Endothelial cell of umbilical vein (primary cell): ENCODE measurements at regions of chr11 and their contacts with region 1.

Region 1: GRCh38 chr11:108121274-108122155 is at the start of gene ACAT1:
- DNase-seq: peak; percentile 92
- H3K4me3 ChIP-seq: peak within 1 kb of the TSS; percentile 58 to 85 (median 60)
- H3K27ac ChIP-seq: peak within 1 kb of the TSS; percentile 19
- H3K4me1 ChIP-seq: peaks cover 16% of the 10 kb centered on the region
- H3K27me3 ChIP-seq: no peaks in the 10 kb centered on the region
- CTCF ChIP-seq: peak in 1 of 2 donors; percentile 38
- POLR2A ChIP-seq: peak; percentile 87
- total RNA-seq, gene ACAT1: 51.7 and 59.9 TPM in 2 replicates

Region 2: GRCh38 chr11:108008656-108009496 is 112.6 kb before region 1 on chr11 and contains the start of gene CUL5:
- CTCF ChIA-PET with region 1: interaction called, 6 read pairs
- POLR2A ChIA-PET with region 1: no interaction called
- dilution Hi-C with region 1: no loop called
- intact Hi-C with region 1: loop called (anchors 1 kb)
- DNase-seq: peak; percentile 90
- H3K4me3 ChIP-seq: peak within 1 kb of the TSS; percentile 44 to 88 (median 60)
- H3K27ac ChIP-seq: peak within 1 kb of the TSS; percentile 75
- H3K4me1 ChIP-seq: peaks cover 12% of the 10 kb centered on the region
- H3K27me3 ChIP-seq: no peaks in the 10 kb centered on the region
- CTCF ChIP-seq: peak; percentile 91 to 96
- POLR2A ChIP-seq: peak; percentile 91
- total RNA-seq, gene CUL5: 36.6 and 37.6 TPM in 2 replicates

Region 3: GRCh38 chr11:108147150-108147549 is 25.6 kb after region 1 on chr11:
- CTCF ChIA-PET with region 1: interaction called, 12 read pairs
- POLR2A ChIA-PET with region 1: no interaction called
- dilution Hi-C with region 1: no loop called
- intact Hi-C with region 1: no loop called
- DNase-seq: no peak
- H3K4me3 ChIP-seq: no peak overlapping the region
- H3K27ac ChIP-seq: no peak overlapping the region
- H3K4me1 ChIP-seq: no peaks in the 10 kb centered on the region
- H3K27me3 ChIP-seq: no peaks in the 10 kb centered on the region
- CTCF ChIP-seq: no peak
- POLR2A ChIP-seq: no peak

Region 4: DNA sequence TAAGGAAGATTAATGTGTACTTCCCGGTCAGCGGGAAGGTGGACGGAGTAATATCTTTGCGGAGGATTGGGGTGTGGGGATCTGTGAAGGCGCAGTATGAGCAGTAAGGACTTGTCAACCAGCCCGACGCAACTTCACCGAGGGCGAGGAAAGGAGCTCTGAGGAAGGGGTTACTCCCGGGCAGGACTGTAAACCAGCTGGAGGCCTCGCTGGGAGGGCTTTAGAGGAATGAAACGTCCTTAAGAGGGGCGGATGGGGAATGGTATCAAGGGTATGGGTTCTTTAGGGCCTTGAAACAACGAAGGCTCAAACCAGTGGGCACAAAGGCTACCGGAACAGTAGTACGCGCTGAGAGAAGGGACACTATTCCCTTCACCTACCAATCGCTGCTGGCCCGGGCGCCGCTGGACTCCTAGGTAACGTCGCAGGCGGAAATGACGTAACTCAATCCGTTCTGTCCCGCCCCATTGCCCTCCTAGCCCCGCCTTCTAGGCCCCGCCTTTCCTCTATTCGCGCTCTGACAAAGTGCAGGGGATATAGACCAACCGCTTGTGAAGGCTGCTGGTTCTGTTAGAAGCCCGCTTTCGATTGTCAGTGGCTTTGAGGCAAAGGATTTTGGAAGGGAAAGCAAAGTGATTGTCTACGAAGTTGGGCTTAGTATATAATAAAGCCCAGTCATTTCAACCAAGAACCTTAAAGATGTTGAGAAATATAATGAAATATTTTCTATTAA is 345.7 kb after region 1 on chr11 and contains the start of gene C11orf65:
- CTCF ChIA-PET with region 1: interaction called, 3 read pairs
- POLR2A ChIA-PET with region 1: no interaction called
- dilution Hi-C with region 1: no loop called
- intact Hi-C with region 1: loop called (anchors 2 kb)
- DNase-seq: peak; percentile 99
- H3K4me3 ChIP-seq: peak within 1 kb of the TSS; percentile 38 to 86 (median 62)
- H3K27ac ChIP-seq: peak within 1 kb of the TSS; percentile 97
- H3K4me1 ChIP-seq: peaks cover 3% of the 10 kb centered on the region
- H3K27me3 ChIP-seq: no peaks in the 10 kb centered on the region
- CTCF ChIP-seq: no peak
- POLR2A ChIP-seq: peak; percentile 97
- total RNA-seq, gene C11orf65: not detected in 2 replicates

Region 5: GRCh38 chr11:108497317-108498045 is 376.0 kb after region 1 on chr11:
- CTCF ChIA-PET with region 1: no interaction called
- POLR2A ChIA-PET with region 1: no interaction called
- dilution Hi-C with region 1: no loop called
- intact Hi-C with region 1: loop called (anchors 5 kb)
- DNase-seq: peak; percentile 99
- H3K4me3 ChIP-seq: peak overlapping the region; percentile 26 to 71 (median 48)
- H3K27ac ChIP-seq: peak overlapping the region; percentile 81
- H3K4me1 ChIP-seq: peaks cover 10% of the 10 kb centered on the region
- H3K27me3 ChIP-seq: no peaks in the 10 kb centered on the region
- CTCF ChIP-seq: no peak
- POLR2A ChIP-seq: peak; percentile 89

Region 6: GRCh38 chr11:108654994-108655631 is 533.6 kb after region 1 on chr11:
- CTCF ChIA-PET with region 1: interaction called, 144 read pairs
- POLR2A ChIA-PET with region 1: no interaction called
- dilution Hi-C with region 1: no loop called
- intact Hi-C with region 1: no loop called
- DNase-seq: peak; percentile 47
- H3K4me3 ChIP-seq: no peak overlapping the region
- H3K27ac ChIP-seq: no peak overlapping the region
- H3K4me1 ChIP-seq: no peaks in the 10 kb centered on the region
- H3K27me3 ChIP-seq: no peaks in the 10 kb centered on the region
- CTCF ChIP-seq: peak; percentile 36 to 54
- POLR2A ChIP-seq: no peak

Region 7: GRCh38 chr11:109697140-109697843 is 1575.8 kb after region 1 on chr11:
- CTCF ChIA-PET with region 1: interaction called, 5 read pairs
- POLR2A ChIA-PET with region 1: no interaction called
- dilution Hi-C with region 1: no loop called
- intact Hi-C with region 1: loop called (anchors 10 kb)
- DNase-seq: peak; percentile 44
- H3K4me3 ChIP-seq: no peak overlapping the region
- H3K27ac ChIP-seq: no peak overlapping the region
- H3K4me1 ChIP-seq: no peaks in the 10 kb centered on the region
- H3K27me3 ChIP-seq: no peaks in the 10 kb centered on the region
- CTCF ChIP-seq: peak; percentile 59 to 68
- POLR2A ChIP-seq: no peak